ENCODE measurements at regions of chr17 and their contacts with region 1.

Region 1: DNA sequence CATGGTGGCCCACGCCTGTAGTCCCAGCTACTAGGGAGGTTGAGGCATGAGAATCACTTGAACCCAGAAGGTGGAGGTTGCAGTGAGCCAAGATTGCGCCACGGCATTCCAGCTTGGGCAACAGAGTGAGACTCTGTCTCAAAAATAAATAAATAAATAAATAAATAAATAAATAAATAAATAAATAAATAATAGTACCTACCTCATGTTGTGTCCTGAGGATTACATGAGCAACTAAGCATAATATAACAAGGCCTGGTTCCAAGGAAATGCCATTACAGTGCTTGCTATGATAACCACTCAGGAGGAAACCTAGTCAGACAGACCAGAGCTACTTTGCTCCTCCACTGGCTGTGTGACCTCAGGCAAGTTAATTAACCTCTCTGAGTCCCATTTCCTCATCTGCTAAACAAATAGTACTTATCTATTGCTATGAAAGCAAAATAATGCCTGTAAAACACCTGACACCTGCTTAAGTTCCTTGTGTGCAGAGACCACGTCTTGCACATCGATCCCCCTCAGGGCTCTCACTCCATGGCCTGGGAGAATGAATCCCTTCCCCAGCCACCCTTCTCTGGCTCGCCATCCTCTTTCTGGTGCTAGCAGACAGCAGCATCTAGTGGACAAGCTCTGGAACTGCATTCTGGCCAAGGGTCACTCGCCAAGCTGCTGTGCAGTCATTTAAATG is 7.5 kb downstream of the EPOP start:
- H3K4me3 Mint-ChIP-seq: no peak overlapping the region
- H3K27ac Mint-ChIP-seq: no peak overlapping the region
- H3K4me1 Mint-ChIP-seq: peaks cover 41% of the 10 kb centered on the region
- H3K27me3 Mint-ChIP-seq: peaks cover 77% of the 10 kb centered on the region

Region 2: GRCh38 chr17:38428112-38428642 is 239.1 kb before region 1 on chr17 and contains the start of gene ARHGAP23:
- intact Hi-C with region 1: loop called (anchors 10 kb)
- H3K4me3 Mint-ChIP-seq: peak within 1 kb of the TSS; percentile 71
- H3K27ac Mint-ChIP-seq: peak within 1 kb of the TSS; percentile 42
- H3K4me1 Mint-ChIP-seq: peaks cover 50% of the 10 kb centered on the region
- H3K27me3 Mint-ChIP-seq: peaks cover 49% of the 10 kb centered on the region

Region 3: DNA sequence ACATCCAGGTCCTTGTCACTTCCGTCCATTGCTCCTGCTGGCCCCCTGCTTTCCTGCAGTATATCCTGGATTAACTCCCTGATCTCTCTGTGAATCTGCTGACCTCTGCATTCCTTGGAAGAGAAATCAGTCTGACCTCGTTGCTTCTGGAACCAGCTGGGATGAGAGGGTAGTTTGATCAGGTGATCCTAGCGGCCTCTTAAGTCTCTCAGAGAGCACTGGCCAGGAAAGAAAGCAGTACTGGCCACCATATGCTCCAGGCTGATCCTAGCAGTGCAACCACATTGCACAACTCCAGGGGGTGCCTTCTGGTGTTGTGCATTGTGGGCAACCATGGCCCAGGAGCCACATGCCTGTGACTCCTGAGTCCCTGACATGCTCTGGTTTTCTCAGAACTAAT is 159.8 kb before region 1 on chr17:
- intact Hi-C with region 1: no loop called
- H3K4me3 Mint-ChIP-seq: no peak overlapping the region
- H3K27ac Mint-ChIP-seq: no peak overlapping the region
- H3K4me1 Mint-ChIP-seq: peaks cover 7% of the 10 kb centered on the region
- H3K27me3 Mint-ChIP-seq: peaks cover 41% of the 10 kb centered on the region

Region 4: DNA sequence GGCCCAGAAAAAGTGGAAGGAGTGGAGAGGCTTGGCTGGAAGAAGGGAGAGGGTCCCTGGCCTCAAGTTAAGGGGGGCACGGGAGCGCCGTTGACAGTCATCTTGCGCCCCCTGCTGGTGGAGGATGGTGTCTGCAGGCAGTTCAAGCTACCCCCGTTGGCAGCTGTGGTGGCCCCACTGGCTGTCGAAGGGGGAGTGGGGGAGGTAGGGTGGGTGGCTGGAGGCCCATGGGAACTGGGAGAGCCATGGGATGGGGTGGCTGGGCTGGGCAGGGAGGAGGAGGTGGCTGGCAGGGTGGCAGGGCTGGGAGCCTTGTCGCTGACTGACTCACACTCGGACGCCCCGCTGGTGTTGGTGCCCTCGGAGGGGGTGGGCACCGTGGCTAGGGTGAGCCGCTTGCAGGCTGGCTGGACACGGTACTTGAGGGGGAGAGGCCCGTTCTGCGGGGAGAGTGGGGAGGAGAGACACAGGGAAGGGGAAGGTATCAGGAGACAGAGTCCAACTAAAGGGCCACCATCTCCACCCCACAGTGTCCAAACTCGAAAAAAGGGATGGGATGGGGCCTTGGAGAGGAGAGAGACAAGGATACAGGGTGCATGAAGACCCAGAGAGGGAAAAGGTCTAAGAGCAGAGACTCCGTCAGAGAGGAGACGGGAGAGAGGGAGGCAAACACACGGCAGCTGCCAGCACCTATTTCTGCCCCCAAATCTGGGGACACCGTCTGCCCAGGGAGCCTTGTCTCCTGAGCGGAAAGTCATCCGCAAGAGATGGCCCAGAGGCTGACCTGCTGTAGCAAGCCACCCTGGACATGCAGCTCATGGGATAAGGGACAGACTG is 68.1 kb after region 1 on chr17:
- intact Hi-C with region 1: loop called (anchors 2 kb)
- H3K4me3 Mint-ChIP-seq: no peak overlapping the region
- H3K27ac Mint-ChIP-seq: peak overlapping the region; percentile 18
- H3K4me1 Mint-ChIP-seq: peaks cover 48% of the 10 kb centered on the region
- H3K27me3 Mint-ChIP-seq: peaks cover 34% of the 10 kb centered on the region